ENCODE measurements at regions of chr19 and their contacts with region 1.

Region 1: GRCh38 chr19:18594096-18594823 is 5.7 kb downstream of the REX1BD start:
- DNase-seq: peak; percentile 87
- ATAC-seq: peak; percentile 72
- H3K4me3 Mint-ChIP-seq: peak overlapping the region; percentile 72
- H3K27ac Mint-ChIP-seq: peak overlapping the region; percentile 56
- H3K4me1 Mint-ChIP-seq: peaks cover 23% of the 10 kb centered on the region
- H3K27me3 Mint-ChIP-seq: peaks cover 3% of the 10 kb centered on the region

Region 2: GRCh38 chr19:18675779-18676178 is 81.5 kb after region 1 on chr19:
- CTCF ChIA-PET with region 1: interaction called, 3 read pairs
- POLR2A ChIA-PET with region 1: no interaction called
- intact Hi-C with region 1: loop called (anchors 1 to 5 kb)
- DNase-seq: peak; percentile 62
- ATAC-seq: no peak
- H3K4me3 Mint-ChIP-seq: no peak overlapping the region
- H3K27ac Mint-ChIP-seq: no peak overlapping the region
- H3K4me1 Mint-ChIP-seq: no peaks in the 10 kb centered on the region
- H3K27me3 Mint-ChIP-seq: no peaks in the 10 kb centered on the region

Region 3: DNA sequence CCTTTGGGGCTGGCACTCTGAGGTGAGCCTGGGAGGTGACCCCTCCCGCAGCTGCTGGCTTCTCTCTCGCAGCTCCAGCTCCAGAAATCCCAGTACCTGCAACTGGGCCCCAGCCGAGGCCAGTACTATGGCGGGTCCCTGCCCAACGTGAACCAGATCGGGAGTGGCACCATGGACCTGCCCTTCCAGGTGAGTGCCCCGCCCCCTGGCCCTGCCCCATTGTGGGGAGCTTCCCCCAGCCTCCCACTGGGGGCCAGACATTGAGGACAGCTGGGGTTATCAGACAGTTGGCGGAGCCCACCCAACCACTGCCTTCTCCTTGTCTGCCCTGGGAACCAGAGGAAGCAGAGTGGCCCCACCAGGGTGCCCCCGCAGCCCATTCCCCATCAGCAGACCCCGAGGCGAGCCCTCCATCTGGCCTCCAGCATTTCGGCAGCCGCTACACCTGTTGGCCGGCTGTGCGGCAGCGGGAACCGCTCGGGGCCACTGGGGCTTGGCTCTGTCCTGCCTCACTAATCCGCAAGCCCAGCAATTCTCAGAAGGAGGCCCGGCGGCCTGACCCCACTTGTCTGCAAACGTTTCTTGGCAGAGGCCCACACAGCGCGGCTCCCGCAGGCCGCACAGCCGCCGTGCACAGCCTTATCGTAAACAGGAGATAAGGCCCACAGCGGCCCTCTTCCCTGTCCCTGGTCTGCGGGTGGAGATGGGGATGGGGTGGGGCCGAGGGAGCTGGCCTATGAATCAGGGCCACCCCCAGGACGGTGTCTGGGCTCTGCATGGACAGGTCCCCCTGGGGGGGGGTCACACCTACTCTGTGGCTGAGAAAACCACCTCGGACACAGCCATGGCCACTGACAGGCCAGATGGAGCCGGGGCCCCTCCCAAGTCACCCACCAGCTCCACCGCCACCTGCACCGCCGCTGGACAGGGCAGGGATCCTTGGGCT is 148.9 kb after region 1 on chr19:
- CTCF ChIA-PET with region 1: no interaction called
- POLR2A ChIA-PET with region 1: no interaction called
- intact Hi-C with region 1: no loop called
- DNase-seq: no peak
- ATAC-seq: no peak
- H3K4me3 Mint-ChIP-seq: no peak overlapping the region
- H3K27ac Mint-ChIP-seq: no peak overlapping the region
- H3K4me1 Mint-ChIP-seq: no peaks in the 10 kb centered on the region
- H3K27me3 Mint-ChIP-seq: no peaks in the 10 kb centered on the region

Region 4: DNA sequence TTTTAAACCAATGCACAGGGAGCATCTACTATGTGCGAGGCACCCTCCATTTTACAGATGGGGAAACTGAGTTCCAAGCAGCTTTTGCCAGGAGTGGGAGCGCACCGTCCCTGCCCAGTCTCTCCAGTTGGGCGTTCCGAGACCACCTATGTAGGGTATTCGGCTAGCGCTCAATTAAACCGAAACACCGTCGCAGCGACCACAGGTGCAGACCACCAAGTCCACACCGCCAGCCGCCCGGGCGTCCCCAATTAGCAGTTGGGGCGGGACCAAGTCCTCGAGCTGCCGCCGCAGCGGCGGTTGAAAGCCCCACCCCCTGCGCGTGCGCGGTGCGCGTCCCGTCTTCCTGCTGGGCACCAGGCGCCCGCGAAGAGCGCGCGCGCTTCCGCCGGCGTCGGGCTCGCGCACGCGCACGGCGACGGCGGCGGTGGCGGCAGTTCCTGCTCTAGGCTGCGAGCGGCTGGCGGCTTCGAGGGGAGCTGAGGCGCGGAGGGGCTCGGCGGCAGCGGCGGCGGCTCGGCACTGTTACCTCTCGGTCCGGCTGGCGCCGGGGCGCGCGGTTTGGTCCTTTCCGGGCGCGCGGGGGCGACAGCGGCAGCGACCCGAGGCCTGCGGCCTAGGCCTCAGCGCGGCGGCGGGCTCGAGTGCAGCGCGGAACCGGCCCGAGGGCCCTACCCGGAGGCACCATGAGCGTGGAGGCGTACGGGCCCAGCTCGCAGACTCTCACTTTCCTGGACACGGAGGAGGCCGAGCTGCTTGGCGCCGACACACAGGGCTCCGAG is 237.5 kb after region 1 on chr19 and contains the start of gene UPF1:
- CTCF ChIA-PET with region 1: no interaction called
- POLR2A ChIA-PET with region 1: interaction called, 3 read pairs
- intact Hi-C with region 1: loop called in 1 of 2 experiments (anchors 1 kb)
- DNase-seq: peak; percentile 98
- ATAC-seq: peak; percentile 82
- H3K4me3 Mint-ChIP-seq: peak within 1 kb of the TSS; percentile 96
- H3K27ac Mint-ChIP-seq: peak within 1 kb of the TSS; percentile 90
- H3K4me1 Mint-ChIP-seq: peaks cover 34% of the 10 kb centered on the region
- H3K27me3 Mint-ChIP-seq: peaks cover 3% of the 10 kb centered on the region
- total RNA-seq, gene UPF1: 72.4 to 74.0 TPM